PC-3 (cell line): ENCODE measurements at regions of chr3 and their contacts with region 1.

Region 1: DNA sequence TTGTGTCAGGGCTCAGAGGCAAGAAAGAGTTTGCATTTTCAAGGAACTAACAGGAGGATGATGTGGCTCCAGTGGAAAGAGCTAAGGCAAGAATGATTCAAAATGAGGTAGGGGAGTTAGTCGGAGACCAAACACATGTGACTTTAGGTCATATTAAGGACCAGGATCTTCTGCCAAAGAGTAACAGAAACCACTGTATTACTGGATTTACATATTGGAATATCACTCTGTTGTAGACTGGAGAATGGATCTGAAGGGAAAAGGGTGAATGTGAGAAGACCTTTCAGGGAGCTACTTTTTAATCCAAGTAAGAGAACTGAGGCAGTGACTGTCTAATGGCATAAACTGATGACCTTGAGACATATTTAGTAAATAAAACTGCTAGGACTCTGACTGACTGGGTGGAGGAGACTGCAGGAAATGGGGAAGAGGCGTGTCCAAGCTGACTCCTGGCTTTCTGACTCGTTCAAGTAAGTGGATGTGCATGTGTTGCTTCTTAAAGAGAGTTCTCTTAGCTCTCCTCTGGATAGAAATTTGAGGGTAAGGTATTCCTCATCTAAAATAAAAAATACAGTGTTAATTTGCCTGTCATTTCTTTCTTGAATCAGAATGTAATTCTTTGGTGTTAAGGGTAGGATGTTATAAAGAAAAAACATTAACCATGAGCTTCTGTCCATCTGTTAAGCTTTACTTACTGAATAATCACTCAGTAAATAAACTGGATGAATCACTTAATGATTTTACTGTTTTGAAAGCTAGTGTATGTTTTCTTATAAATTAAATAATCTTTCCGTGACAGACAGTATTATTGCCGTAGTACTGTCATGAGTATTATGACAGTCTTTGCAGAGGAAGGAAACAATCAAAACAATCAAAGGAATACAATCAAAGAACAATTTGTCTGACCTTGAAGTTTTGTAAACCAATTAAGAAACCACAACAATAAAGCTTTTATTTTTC is 58.3 kb upstream of the CFAP20DC start:
- DNase-seq: peak; percentile 67
- ATAC-seq: peak; percentile 82
- H3K4me3 ChIP-seq: peak overlapping the region; percentile 8; the same call in 1 of the 2 replicates
- H3K27ac ChIP-seq: peak overlapping the region; percentile 72
- H3K4me1 ChIP-seq: peaks cover 36% of the 10 kb centered on the region
- H3K27me3 ChIP-seq: no peaks in the 10 kb centered on the region
- CTCF ChIP-seq: no peak

Region 2: DNA sequence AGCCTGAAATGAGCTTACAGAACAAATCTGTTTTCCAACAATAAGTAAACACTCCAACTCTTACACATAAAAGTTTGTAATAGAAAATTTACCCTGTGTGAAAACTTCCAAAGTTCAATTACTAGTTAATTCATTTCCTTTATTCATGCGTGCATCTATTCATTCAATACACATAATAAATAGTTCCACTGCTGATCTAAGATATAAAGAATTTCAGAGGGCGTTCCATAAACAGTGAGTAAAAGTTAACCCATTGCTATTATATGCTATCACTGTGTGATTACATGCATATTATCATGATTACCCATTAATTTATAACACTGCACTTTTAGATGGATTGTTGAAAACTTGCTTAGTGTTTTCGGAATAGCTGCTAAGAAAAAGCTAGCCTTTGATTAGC is 22.2 kb before region 1 on chr3:
- CTCF ChIA-PET with region 1: no interaction called
- POLR2A ChIA-PET with region 1: interaction called, 10 read pairs
- intact Hi-C with region 1: no loop called
- DNase-seq: peak; percentile 58
- ATAC-seq: peak; percentile 76
- H3K4me3 ChIP-seq: no peak overlapping the region
- H3K27ac ChIP-seq: 0 out of 2 replicates have a peak overlapping the region, but pooled peaks have one; percentile 9
- H3K4me1 ChIP-seq: peaks cover 12% of the 10 kb centered on the region; the same call in 1 of the 2 replicates
- H3K27me3 ChIP-seq: no peaks in the 10 kb centered on the region
- CTCF ChIP-seq: no peak

Region 3: DNA sequence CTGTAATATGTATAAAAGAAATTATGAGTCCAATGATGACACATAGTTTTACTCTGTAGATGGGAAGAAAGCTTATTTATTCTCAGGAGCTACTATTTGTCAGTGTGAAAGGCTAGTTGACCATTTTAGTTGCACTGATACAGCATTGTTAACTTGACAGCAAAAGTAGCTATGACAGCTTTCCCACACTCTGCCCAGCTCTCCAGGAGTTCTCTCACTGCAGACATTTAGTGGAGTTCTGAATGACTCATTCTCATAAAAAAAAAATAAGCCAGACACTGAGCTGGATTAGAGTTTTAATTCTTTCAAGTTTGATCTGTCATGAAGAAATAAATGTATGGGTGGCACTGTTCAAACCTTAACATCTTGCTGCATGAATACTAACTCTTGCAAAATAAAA is 18.9 kb after region 1 on chr3:
- CTCF ChIA-PET with region 1: no interaction called
- POLR2A ChIA-PET with region 1: no interaction called
- intact Hi-C with region 1: loop called (anchors 2 kb)
- DNase-seq: peak; percentile 77
- ATAC-seq: peak; percentile 98
- H3K4me3 ChIP-seq: no peak overlapping the region
- H3K27ac ChIP-seq: peak overlapping the region; percentile 82
- H3K4me1 ChIP-seq: peaks cover 17% of the 10 kb centered on the region
- H3K27me3 ChIP-seq: no peaks in the 10 kb centered on the region
- CTCF ChIP-seq: no peak